ENCODE measurements at regions of chr15 and their contacts with region 1.

Region 1: GRCh38 chr15:74653426-74654123 is 37.9 kb downstream of the CLK3 start:
- DNase-seq: peak; percentile 55 to 73
- H3K4me3 ChIP-seq: no peak overlapping the region
- H3K27ac ChIP-seq: peak overlapping the region; percentile 9; the same call in 1 of the 2 replicates
- H3K4me1 ChIP-seq: no peaks in the 10 kb centered on the region
- H3K27me3 ChIP-seq: no peaks in the 10 kb centered on the region
- CTCF ChIP-seq: no peak

Region 2: GRCh38 chr15:74626752-74627692 is 26.6 kb before region 1 on chr15:
- CTCF ChIA-PET with region 1: no interaction called
- POLR2A ChIA-PET with region 1: no interaction called
- intact Hi-C with region 1: no loop called
- DNase-seq: no peak
- H3K4me3 ChIP-seq: no peak overlapping the region
- H3K27ac ChIP-seq: no peak overlapping the region
- H3K4me1 ChIP-seq: no peaks in the 10 kb centered on the region
- H3K27me3 ChIP-seq: no peaks in the 10 kb centered on the region
- CTCF ChIP-seq: no peak

Region 3: GRCh38 chr15:74674119-74674518 is 20.5 kb after region 1 on chr15:
- CTCF ChIA-PET with region 1: no interaction called
- POLR2A ChIA-PET with region 1: interaction called, 19 read pairs
- intact Hi-C with region 1: no loop called
- DNase-seq: peak in 1 of 2 experiments; percentile 36
- H3K4me3 ChIP-seq: no peak overlapping the region
- H3K27ac ChIP-seq: no peak overlapping the region
- H3K4me1 ChIP-seq: no peaks in the 10 kb centered on the region
- H3K27me3 ChIP-seq: no peaks in the 10 kb centered on the region
- CTCF ChIP-seq: no peak

Region 4: DNA sequence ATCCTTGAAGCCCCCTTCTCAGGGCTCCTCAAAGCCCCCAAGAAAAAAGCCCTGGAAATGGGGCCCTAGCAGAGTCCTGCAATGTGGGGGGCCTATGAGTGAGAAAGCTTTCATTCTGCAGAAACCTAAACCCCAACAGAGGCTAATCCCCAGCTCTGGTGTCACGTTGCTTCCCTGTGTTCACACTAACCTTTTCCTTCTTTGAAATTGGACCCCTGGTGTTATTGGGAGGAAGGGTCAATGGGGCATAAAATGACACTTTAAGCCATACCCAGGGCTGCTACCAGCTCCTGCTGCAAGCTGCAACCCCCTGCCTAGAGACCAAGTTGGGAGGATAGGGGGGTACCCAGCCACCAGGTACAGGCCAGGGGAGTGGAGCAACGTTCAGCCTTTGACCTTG is 97.2 kb after region 1 on chr15:
- CTCF ChIA-PET with region 1: no interaction called
- POLR2A ChIA-PET with region 1: no interaction called
- intact Hi-C with region 1: no loop called
- DNase-seq: no peak
- H3K4me3 ChIP-seq: no peak overlapping the region
- H3K27ac ChIP-seq: no peak overlapping the region
- H3K4me1 ChIP-seq: peaks cover 7% of the 10 kb centered on the region; the same call in 1 of the 2 replicates
- H3K27me3 ChIP-seq: no peaks in the 10 kb centered on the region
- CTCF ChIP-seq: no peak

Region 5: GRCh38 chr15:74950078-74951000 is 296.8 kb after region 1 on chr15:
- CTCF ChIA-PET with region 1: interaction called, 11 read pairs
- POLR2A ChIA-PET with region 1: no interaction called
- intact Hi-C with region 1: no loop called
- DNase-seq: peak; percentile 67 to 75
- H3K4me3 ChIP-seq: no peak overlapping the region
- H3K27ac ChIP-seq: no peak overlapping the region
- H3K4me1 ChIP-seq: peaks cover 23% of the 10 kb centered on the region
- H3K27me3 ChIP-seq: no peaks in the 10 kb centered on the region
- CTCF ChIP-seq: peak; percentile 99

Measured in PC-9 (cell line).